Left lung (tissue), 14 donors: ENCODE measurements at regions of chr13 and their contacts with region 1.

Region 1: DNA sequence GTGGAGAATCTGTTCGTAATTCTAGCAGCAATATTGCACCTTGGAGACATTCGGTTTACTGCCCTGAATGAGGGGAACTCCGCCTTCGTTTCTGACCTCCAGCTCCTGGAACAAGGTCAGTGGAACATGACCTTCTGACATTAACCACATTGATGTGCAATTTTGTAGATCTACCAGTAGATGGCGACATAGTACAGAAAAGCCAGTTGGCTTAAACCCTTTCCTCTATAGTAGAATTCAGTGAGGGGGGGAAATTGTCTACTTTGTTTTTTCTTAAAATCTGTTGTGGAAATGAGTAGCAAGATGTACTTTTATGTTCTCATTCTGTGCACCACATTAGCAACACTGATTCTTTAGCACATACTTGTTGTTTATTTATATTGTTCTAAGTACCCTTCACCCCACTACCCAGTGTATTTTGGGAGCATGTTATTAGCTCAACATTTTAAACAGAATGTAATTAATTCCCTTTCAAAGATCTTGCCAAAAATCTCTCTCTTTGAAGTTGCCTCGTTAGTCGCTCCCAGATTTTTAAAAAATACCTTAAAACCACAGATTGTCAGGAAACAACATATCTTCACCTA is 332.2 kb downstream of the MYO16 start:
- DNase-seq: peak in 2 of 4 donors; percentile 33 to 43
- ATAC-seq: peak; percentile 92
- H3K4me3 ChIP-seq: no peak overlapping the region
- H3K27ac ChIP-seq: no peak overlapping the region
- H3K4me1 ChIP-seq: no peaks in the 10 kb centered on the region
- H3K27me3 ChIP-seq: no peaks in the 10 kb centered on the region
- CTCF ChIP-seq: peak; percentile 77 to 78

Region 2: GRCh38 chr13:108755083-108755482 is 206.6 kb before region 1 on chr13:
- intact Hi-C with region 1: no loop called
- DNase-seq: peak in 1 of 4 donors; percentile 1
- ATAC-seq: peak; percentile 21
- H3K4me3 ChIP-seq: no peak overlapping the region
- H3K27ac ChIP-seq: no peak overlapping the region
- H3K4me1 ChIP-seq: no peaks in the 10 kb centered on the region
- H3K27me3 ChIP-seq: no peaks in the 10 kb centered on the region
- CTCF ChIP-seq: no peak

Region 3: DNA sequence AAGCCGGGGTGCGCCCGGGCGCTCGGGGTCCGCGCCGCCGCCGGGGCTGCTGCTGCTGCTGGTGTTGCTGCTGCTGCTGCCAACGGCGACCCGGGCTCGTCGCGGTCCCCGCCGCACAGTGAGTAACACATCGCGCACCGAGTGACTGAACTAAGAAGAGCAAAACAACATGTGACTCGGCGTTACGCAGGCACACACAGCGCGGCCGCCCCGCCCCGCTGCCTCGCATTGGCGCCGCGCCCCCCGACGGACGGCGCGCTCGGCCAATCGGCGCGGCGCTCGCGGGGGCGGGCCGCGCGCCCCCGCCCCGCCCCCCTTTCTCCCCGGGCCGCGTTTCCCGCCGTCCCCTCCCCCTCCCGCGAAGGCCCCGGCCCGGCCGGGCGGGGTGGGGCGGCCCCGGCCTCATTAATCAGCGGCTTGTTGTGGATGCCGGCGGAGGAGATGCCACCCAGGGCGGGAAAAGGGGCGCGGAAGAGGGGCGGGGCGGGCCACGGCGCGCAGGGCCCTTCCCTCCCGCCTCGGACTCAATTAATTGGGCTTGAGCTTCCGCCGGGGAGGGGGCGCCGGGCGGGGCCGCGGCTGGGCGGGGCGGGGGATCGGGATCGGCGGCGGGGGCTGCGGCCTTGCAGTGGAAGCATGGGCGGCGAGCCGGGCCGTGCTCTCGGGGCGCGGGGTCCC is 825.0 kb after region 1 on chr13 and contains the start of gene IRS2:
- intact Hi-C with region 1: loop called in 1 of 2 experiments (anchors 10 kb)
- DNase-seq: peak; percentile 92 to 97 (median 94)
- ATAC-seq: peak; percentile 79
- H3K4me3 ChIP-seq: peak within 1 kb of the TSS; percentile 65 to 80
- H3K27ac ChIP-seq: peak within 1 kb of the TSS; percentile 84 to 89
- H3K4me1 ChIP-seq: peaks cover 3 to 71% of the 10 kb centered on the region in 2 donors
- H3K27me3 ChIP-seq: peaks cover 0 to 15% of the 10 kb centered on the region in 2 donors
- CTCF ChIP-seq: no peak
- polyA plus RNA-seq, gene IRS2: 4.9 to 8.4 (median 7.1) TPM

Region 4: DNA sequence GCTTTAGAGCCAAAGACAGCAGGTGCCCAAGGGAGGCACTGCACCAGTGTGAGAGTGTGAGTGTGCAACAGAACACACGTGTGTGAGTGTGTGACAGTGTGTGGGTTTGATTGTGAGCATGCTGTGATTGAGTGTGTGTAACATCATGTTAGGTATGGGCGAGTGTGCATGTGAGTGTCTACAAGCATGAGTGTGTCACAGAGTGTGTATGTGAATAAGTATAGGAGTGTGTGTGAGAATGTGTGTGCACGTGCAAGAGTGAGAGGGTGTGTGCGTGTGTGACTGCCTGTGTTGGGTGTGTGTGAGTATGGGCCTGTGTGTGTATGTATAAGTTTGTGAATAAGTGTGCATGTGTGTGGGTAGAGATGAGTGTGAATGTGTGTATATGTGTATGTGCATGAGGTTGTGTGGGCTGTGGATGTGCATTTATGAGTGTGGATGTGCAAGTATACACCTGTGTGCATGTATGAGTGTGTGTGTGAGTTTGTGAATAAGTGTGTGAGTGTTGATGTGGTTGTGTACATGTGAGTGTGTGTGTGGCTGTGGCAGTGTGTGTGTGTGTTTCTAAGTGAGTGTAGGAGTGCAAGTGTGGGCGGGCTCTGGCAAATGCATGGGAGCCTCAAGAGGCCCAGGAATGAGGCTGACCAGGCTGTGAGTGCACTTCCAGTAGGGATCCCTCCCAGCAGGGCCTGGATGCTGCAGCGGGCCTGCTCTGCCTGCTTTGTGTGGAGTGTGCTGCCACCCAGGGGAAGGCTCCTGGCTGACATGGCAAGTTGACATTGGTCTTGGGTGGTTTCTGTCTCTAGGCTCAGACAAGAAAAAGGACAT is 1146.9 kb after region 1 on chr13:
- intact Hi-C with region 1: loop called in 1 of 2 experiments (anchors 10 kb)
- DNase-seq: peak in 2 of 4 donors; percentile 73 to 82
- ATAC-seq: peak; percentile 94
- H3K4me3 ChIP-seq: no peak overlapping the region
- H3K27ac ChIP-seq: no peak overlapping the region
- H3K4me1 ChIP-seq: no peaks in the 10 kb centered on the region
- H3K27me3 ChIP-seq: no peaks in the 10 kb centered on the region
- CTCF ChIP-seq: peak; percentile 47 to 62